CD4-positive, alpha-beta T cell (primary cell): ENCODE measurements at regions of chr10 and their contacts with region 1.

Region 1: GRCh38 chr10:28532383-28533175 is at the start of gene WAC:
- DNase-seq: peak; percentile 93 to 98 (median 97)
- ATAC-seq: peak; percentile 81
- H3K4me3 ChIP-seq: peak within 1 kb of the TSS; percentile 98
- H3K4me3 Mint-ChIP-seq: peak within 1 kb of the TSS; percentile 100
- H3K27ac ChIP-seq: peak within 1 kb of the TSS; percentile 99
- H3K27ac Mint-ChIP-seq: peak within 1 kb of the TSS; percentile 98
- H3K4me1 ChIP-seq: peaks cover 22% of the 10 kb centered on the region
- H3K4me1 Mint-ChIP-seq: peaks cover 73% of the 10 kb centered on the region
- H3K27me3 ChIP-seq: no peaks in the 10 kb centered on the region
- H3K27me3 Mint-ChIP-seq: no peaks in the 10 kb centered on the region
- CTCF ChIP-seq: peak; percentile 30
- total RNA-seq, gene WAC: 169 to 177 TPM

Region 2: GRCh38 chr10:28432210-28432676 is 100.3 kb before region 1 on chr10:
- CTCF ChIA-PET with region 1: no interaction called
- POLR2A ChIA-PET with region 1: no interaction called
- intact Hi-C with region 1: loop called in 1 of 2 experiments (anchors 2 kb)
- DNase-seq: peak in 8 of 14 experiments; percentile 2 to 72 (median 16)
- ATAC-seq: peak; percentile 65
- H3K4me3 ChIP-seq: peak overlapping the region; percentile 15
- H3K4me3 Mint-ChIP-seq: peak overlapping the region; percentile 44
- H3K27ac ChIP-seq: no peak overlapping the region
- H3K27ac Mint-ChIP-seq: no peak overlapping the region
- H3K4me1 ChIP-seq: peaks cover 5% of the 10 kb centered on the region
- H3K4me1 Mint-ChIP-seq: peaks cover 8% of the 10 kb centered on the region
- H3K27me3 ChIP-seq: no peaks in the 10 kb centered on the region
- H3K27me3 Mint-ChIP-seq: peaks cover 4% of the 10 kb centered on the region
- CTCF ChIP-seq: peak; percentile 85

Region 3: DNA sequence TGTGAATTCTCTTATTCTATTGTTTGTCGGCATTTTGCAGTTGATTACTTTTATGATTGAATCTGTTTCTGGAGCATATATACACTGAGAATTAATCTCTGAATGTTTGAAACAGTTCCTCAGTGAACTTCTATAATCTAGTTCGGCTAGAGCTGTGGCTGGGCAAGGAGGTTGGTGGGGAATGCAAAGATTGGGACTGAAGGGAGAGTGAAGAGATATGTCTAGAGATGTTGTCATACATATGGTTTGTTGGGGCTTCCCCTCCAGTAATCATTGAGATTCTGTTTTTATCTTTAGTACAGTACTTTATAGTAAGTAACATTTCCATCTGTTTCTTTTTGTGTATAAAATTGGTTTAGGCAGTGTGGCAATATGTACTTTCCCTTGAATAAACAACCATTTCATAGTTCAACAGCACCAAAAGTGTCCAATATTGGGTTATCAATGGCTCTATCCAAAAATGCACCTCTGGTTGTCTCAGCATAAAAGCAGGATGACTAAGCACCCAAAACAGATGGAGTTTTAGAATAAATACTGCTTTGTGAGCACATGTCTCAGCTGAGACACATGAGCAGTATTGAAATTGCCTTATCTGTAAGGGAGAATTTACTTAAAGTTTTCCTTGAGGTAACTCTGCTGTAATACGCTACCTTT is 37.1 kb after region 1 on chr10:
- CTCF ChIA-PET with region 1: no interaction called
- POLR2A ChIA-PET with region 1: no interaction called
- intact Hi-C with region 1: loop called in 1 of 2 experiments (anchors 5 kb)
- DNase-seq: no peak
- ATAC-seq: no peak
- H3K4me3 ChIP-seq: no peak overlapping the region
- H3K4me3 Mint-ChIP-seq: no peak overlapping the region
- H3K27ac ChIP-seq: no peak overlapping the region
- H3K27ac Mint-ChIP-seq: peak overlapping the region; percentile 46
- H3K4me1 ChIP-seq: peaks cover 31% of the 10 kb centered on the region
- H3K4me1 Mint-ChIP-seq: peaks cover 92% of the 10 kb centered on the region
- H3K27me3 ChIP-seq: no peaks in the 10 kb centered on the region
- H3K27me3 Mint-ChIP-seq: no peaks in the 10 kb centered on the region
- CTCF ChIP-seq: no peak

Region 4: DNA sequence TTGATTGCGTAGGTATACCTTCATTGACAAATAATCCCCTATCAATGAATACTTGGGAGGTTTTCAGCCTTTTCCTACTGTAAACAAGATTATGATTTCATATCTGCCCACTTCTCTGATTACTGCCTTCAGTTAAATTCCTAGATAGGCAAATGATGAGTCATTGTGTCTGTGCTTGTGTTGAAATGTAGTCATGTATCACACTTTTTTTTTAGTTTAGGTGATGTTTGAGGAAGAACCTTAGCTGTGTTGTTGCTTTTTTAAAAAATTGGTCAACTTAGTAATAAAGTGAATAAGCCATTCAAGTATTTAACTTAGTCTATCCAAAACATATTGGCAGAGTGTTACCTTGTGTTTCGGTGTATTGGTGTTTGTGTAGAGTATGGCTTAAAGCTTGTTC is 60.4 kb after region 1 on chr10:
- CTCF ChIA-PET with region 1: interaction called, 4 read pairs
- POLR2A ChIA-PET with region 1: interaction called, 12 read pairs
- intact Hi-C with region 1: loop called in 1 of 2 experiments (anchors 10 kb)
- DNase-seq: peak in 2 of 14 experiments; percentile 24 to 30
- ATAC-seq: no peak
- H3K4me3 ChIP-seq: no peak overlapping the region
- H3K4me3 Mint-ChIP-seq: peak overlapping the region; percentile 3
- H3K27ac ChIP-seq: no peak overlapping the region
- H3K27ac Mint-ChIP-seq: peak overlapping the region; percentile 12
- H3K4me1 ChIP-seq: peaks cover 13% of the 10 kb centered on the region
- H3K4me1 Mint-ChIP-seq: peaks cover 69% of the 10 kb centered on the region
- H3K27me3 ChIP-seq: no peaks in the 10 kb centered on the region
- H3K27me3 Mint-ChIP-seq: no peaks in the 10 kb centered on the region
- CTCF ChIP-seq: no peak

Region 5: DNA sequence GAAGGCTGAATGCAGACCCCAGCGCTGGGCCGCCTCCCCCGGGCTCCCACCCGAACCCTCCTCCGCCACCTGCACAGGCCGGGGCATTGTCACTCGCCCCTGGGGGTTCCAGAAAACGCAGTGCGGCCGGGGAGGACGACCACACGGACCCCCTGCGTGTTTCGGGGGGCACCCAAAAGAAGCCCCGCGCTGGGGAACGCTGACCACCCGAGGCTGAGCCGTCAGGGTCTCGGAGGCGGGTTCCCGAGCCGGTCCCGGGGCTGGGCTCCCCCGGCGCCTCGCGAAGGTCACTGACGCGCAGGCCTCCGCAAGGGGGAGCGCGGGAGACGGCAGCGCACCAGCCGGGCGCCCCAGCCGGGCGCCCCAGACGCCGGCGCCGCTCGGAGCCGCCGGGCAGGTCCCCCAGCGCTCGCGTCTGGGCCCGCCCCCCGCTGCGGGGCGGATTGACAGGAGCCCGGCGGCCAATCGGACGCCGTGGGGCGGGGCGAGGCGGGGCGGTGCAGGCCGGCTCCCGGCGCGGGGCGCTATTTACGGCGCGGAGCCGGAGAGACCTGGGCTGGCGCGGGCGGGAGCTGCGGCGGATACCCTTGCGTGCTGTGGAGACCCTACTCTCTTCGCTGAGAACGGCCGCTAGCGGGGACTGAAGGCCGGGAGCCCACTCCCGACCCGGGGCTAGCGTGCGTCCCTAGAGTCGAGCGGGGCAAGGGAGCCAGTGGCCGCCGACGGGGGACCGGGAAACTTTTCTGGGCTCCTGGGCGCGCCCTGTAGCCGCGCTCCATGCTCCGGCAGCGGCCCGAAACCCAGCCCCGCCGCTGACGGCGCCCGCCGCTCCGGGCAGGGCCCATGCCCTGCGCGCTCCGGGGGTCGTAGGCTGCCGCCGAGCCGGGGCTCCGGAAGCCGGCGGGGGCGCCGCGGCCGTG is 144.6 kb after region 1 on chr10 and contains the start of gene BAMBI:
- CTCF ChIA-PET with region 1: no interaction called
- POLR2A ChIA-PET with region 1: interaction called, 3 read pairs
- intact Hi-C with region 1: loop called in 1 of 2 experiments (anchors 5 kb)
- DNase-seq: peak; percentile 72 to 96 (median 86)
- ATAC-seq: peak; percentile 96
- H3K4me3 ChIP-seq: peak within 1 kb of the TSS; percentile 59
- H3K4me3 Mint-ChIP-seq: peak within 1 kb of the TSS; percentile 85
- H3K27ac ChIP-seq: no peak within 1 kb of the TSS
- H3K27ac Mint-ChIP-seq: no peak within 1 kb of the TSS
- H3K4me1 ChIP-seq: peaks cover 27% of the 10 kb centered on the region
- H3K4me1 Mint-ChIP-seq: peaks cover 31% of the 10 kb centered on the region
- H3K27me3 ChIP-seq: peaks cover 48 to 70% of the 10 kb centered on the region in 2 experiments
- H3K27me3 Mint-ChIP-seq: peaks cover 82% of the 10 kb centered on the region
- CTCF ChIP-seq: peak; percentile 62
- total RNA-seq, gene BAMBI: 2.5 to 2.9 TPM

Region 6: GRCh38 chr10:28807760-28808613 is 275.4 kb after region 1 on chr10:
- CTCF ChIA-PET with region 1: no interaction called
- POLR2A ChIA-PET with region 1: no interaction called
- intact Hi-C with region 1: no loop called
- DNase-seq: no peak
- ATAC-seq: no peak
- H3K4me3 ChIP-seq: no peak overlapping the region
- H3K4me3 Mint-ChIP-seq: no peak overlapping the region
- H3K27ac ChIP-seq: no peak overlapping the region
- H3K27ac Mint-ChIP-seq: no peak overlapping the region
- H3K4me1 ChIP-seq: no peaks in the 10 kb centered on the region
- H3K4me1 Mint-ChIP-seq: no peaks in the 10 kb centered on the region
- H3K27me3 ChIP-seq: peaks cover 18 to 20% of the 10 kb centered on the region in 2 experiments
- H3K27me3 Mint-ChIP-seq: peaks cover 52% of the 10 kb centered on the region
- CTCF ChIP-seq: no peak